SK-N-SH (cell line): ENCODE measurements at regions of chr3 and their contacts with region 1.

Region 1: GRCh38 chr3:128278761-128279600 is 125.7 kb downstream of the EEFSEC start:
- DNase-seq: peak; percentile 88
- H3K4me3 ChIP-seq: no peak overlapping the region; a peak in 1 of 4 replicates
- H3K27ac ChIP-seq: peak overlapping the region; percentile 62 to 100
- H3K4me1 ChIP-seq: peaks cover 45 to 98% of the 10 kb centered on the region in 2 experiments
- H3K27me3 ChIP-seq: no peaks in the 10 kb centered on the region
- CTCF ChIP-seq: no peak
- EP300 ChIP-seq: peak; percentile 74 to 90
- RAD21 ChIP-seq: no peak; the same call in 1 of the 2 replicates

Region 2: DNA sequence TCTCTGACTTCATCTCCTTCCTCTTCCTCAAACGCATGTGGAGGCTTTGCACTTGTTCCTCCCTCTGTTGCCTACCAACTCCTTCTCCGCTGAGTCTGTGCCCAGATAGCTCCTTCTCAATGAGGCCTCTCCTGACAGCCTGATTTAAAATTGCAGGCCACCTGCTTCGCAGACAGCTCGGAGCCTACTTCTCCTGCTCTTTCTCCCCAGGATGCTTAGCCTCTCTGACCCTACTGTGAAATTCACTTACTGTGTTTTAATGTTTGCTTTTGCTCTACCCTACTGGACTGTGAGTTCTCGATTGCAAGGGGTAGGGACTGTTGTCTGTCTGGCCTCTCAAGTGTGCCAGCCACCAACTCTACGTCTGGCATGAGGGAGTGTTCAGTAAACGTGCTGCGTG is 42.3 kb before region 1 on chr3:
- CTCF ChIA-PET with region 1: interaction called, 7 read pairs
- POLR2A ChIA-PET with region 1: interaction called, 13 read pairs
- DNase-seq: peak; percentile 45
- H3K4me3 ChIP-seq: no peak overlapping the region
- H3K27ac ChIP-seq: peak overlapping the region in 1 of 2 experiments; percentile 99; a peak in 3 of 4 replicates
- H3K4me1 ChIP-seq: peaks cover 11 to 84% of the 10 kb centered on the region in 2 experiments; a peak in 3 of 4 replicates
- H3K27me3 ChIP-seq: no peaks in the 10 kb centered on the region
- CTCF ChIP-seq: no peak
- EP300 ChIP-seq: no peak; a peak in 1 of 4 replicates
- RAD21 ChIP-seq: peak; percentile 16

Region 3: DNA sequence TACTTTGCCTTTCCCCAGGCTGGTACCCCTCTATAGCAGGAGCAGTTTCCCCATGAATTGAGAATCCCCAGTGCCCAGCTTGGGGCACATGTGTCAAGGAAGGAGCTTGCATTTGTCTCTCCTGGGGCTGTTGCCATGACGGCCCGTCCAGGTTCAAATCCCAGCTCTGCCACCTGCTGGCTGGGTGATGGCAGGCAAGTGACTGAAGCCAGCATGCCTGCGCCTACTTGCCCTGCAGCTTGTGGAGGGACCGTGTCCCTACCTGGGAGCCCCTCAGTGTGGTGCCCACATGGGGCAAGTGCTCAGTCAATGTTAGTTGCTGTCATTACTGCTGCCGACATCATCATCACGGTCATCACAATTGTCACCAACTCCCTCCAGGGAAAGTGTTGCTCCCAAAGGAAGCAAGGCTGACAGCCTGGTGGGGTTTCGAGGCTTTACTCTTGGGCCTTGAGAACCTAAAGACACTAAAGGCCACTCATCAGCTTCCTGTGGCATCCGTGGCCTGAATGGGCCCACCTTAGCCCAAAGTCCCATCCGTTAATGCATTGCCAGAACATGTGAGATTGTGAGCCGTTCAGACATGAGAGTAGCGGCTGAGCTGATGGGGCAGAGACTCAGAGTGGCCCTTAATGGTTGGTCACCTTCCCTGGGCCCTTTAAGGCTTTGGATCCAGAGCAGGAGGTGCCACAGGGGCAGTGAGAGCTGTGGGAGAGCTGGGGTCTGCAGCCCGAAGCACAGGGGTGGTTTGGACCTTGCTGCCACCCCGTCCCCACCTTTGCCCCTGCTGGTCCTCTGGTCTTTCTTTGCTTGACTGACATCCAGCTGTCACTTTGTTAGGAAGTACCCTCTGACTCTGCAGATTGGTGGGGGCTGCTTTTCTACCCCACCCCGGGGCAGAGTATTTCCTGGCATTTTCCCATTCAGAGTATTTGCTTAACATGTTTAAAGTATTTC is 43.4 kb after region 1 on chr3:
- CTCF ChIA-PET with region 1: interaction called, 11 read pairs
- POLR2A ChIA-PET with region 1: interaction called, 3 read pairs
- DNase-seq: no peak
- H3K4me3 ChIP-seq: no peak overlapping the region
- H3K27ac ChIP-seq: peak overlapping the region in 1 of 2 experiments; percentile 98; a peak in 1 of 4 replicates
- H3K4me1 ChIP-seq: peaks cover 0 to 90% of the 10 kb centered on the region in 2 experiments; a peak in 2 of 4 replicates
- H3K27me3 ChIP-seq: no peaks in the 10 kb centered on the region
- CTCF ChIP-seq: peak; percentile 53
- EP300 ChIP-seq: no peak
- RAD21 ChIP-seq: peak; percentile 62

Region 4: DNA sequence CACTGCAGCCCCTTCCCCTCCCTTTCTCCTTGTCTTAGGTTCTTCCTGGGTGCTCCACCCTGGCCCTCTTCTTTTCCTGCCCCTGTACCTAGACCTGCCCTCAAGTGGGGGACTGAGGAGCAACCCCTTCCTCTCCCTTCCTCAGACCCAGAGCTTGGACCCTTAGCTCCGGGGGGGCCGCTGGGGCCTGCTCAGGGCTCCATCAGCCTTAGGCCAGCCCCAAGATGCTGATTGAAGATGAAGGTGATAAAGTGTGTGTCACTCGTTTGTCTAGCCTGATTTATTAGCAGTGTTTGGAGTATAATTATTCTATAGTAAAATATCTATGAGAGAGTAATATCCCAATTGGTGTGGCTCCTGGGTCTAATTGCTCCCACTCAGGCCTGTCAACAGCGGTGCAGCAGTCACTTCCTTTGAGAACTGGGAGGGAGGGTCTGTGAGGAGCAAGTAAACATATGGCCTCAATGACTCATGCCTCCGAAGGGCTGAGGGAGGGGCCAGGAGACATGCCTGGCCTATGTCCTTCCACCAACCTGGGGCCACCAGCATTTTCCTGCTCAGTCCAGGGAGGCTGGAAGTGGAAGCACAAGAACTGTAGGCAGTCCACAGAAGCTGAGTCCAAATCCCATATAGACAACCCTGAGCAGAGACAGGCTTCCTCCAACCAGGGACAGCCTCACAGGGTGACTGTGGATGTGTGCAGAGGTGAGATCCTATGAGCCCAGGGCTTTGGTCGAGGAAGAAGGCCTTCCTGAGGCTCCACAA is 64.5 kb after region 1 on chr3:
- CTCF ChIA-PET with region 1: no interaction called
- POLR2A ChIA-PET with region 1: no interaction called
- DNase-seq: peak; percentile 63
- H3K4me3 ChIP-seq: no peak overlapping the region
- H3K27ac ChIP-seq: peak overlapping the region in 1 of 2 experiments; percentile 76; a peak in 2 of 4 replicates
- H3K4me1 ChIP-seq: peaks cover 10 to 21% of the 10 kb centered on the region in 2 experiments; a peak in 3 of 4 replicates
- H3K27me3 ChIP-seq: no peaks in the 10 kb centered on the region
- CTCF ChIP-seq: no peak
- EP300 ChIP-seq: no peak
- RAD21 ChIP-seq: no peak